ENCODE measurements at regions of chr12 and their contacts with region 1.

Region 1: DNA sequence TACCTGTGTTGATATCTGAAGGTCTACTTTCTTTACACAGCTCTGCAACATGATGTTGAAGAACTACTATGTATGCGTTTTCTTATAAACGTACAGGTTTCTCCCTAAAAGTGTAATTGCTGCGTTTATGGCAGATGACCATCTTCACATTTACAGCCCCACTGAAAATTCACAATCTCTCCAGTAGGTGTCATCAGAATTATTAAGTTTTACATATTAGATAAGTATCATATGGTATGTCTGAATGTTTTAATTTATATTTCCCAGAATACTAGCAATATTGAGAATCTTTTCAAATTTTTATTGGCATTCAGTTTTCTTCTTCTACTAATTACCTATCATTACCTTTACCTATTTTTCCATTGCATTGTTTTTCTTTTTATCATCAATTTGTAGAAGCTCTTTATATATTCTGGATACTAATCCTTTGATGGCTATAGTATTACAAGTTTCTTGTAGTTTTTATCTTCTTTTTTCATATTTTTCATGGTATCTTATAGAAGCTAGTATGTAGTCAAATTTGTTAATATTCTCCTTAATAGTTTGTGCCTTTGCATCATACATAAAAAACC is 123.5 kb downstream of the CAPZA3 start:
- DNase-seq: peak; percentile 38
- ATAC-seq: no peak
- H3K4me3 ChIP-seq: no peak overlapping the region
- H3K27ac ChIP-seq: no peak overlapping the region
- H3K4me1 ChIP-seq: no peaks in the 10 kb centered on the region
- H3K27me3 ChIP-seq: no peaks in the 10 kb centered on the region
- CTCF ChIP-seq: peak; percentile 43
- POLR2A ChIP-seq: no peak
- RAD21 ChIP-seq: peak; percentile 46

Region 2: GRCh38 chr12:19181666-19182426 is 320.5 kb after region 1 on chr12:
- CTCF ChIA-PET with region 1: no interaction called
- POLR2A ChIA-PET with region 1: no interaction called
- dilution Hi-C with region 1: no loop called
- in situ Hi-C with region 1: loop called (anchors 10 kb)
- intact Hi-C with region 1: loop called (anchors 2 kb)
- DNase-seq: no peak
- ATAC-seq: no peak
- H3K4me3 ChIP-seq: no peak overlapping the region
- H3K27ac ChIP-seq: no peak overlapping the region
- H3K4me1 ChIP-seq: peaks cover 5% of the 10 kb centered on the region
- H3K27me3 ChIP-seq: no peaks in the 10 kb centered on the region
- CTCF ChIP-seq: peak; percentile 37
- POLR2A ChIP-seq: no peak
- RAD21 ChIP-seq: peak; percentile 36

Measured in IMR-90 (cell line).